Heart right ventricle (tissue), 16 donors: ENCODE measurements at regions of chr9 and their contacts with region 1.

Region 1: DNA sequence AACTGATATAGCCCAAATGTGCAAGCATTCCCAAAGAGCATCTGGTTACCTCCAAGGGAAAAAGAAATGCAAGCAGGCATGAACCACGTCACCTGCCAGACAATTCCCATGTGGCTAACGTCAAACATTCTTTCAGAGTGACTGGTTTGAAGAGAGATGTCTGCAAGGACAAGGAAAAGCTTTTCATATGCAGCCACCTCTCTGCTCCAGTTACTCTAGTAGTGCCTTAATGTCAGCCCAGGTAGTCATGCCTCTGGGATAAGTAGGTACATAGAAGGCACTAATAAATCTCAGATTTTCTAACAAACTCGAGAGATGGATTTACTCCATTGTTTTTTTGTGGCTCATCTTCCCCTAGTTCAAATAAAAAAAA is 96.8 kb upstream of the IFNK start:
- DNase-seq: no peak
- ATAC-seq: peak in 3 of 8 donors; percentile 38 to 66 (median 65)
- H3K4me3 ChIP-seq: no peak overlapping the region
- H3K27ac ChIP-seq: no peak overlapping the region
- H3K4me1 ChIP-seq: peaks cover 0 to 32% (median 6%) of the 10 kb centered on the region in 9 donors
- H3K27me3 ChIP-seq: no peaks in the 10 kb centered on the region
- CTCF ChIP-seq: no peak

Region 2: GRCh38 chr9:27272103-27272502 is 155.2 kb before region 1 on chr9:
- intact Hi-C with region 1: no loop called
- DNase-seq: no peak
- ATAC-seq: no peak
- H3K4me3 ChIP-seq: no peak overlapping the region
- H3K27ac ChIP-seq: no peak overlapping the region
- H3K4me1 ChIP-seq: peaks cover 0 to 8% (median 0%) of the 10 kb centered on the region in 9 donors
- H3K27me3 ChIP-seq: no peaks in the 10 kb centered on the region
- CTCF ChIP-seq: no peak

Region 3: GRCh38 chr9:27394154-27394825 is 33.0 kb before region 1 on chr9:
- intact Hi-C with region 1: loop called in 1 of 10 experiments (anchors 5 kb)
- DNase-seq: peak in 1 of 2 donors; percentile 10
- ATAC-seq: peak; percentile 33 to 85 (median 68)
- H3K4me3 ChIP-seq: no peak overlapping the region
- H3K27ac ChIP-seq: peak overlapping the region in 3 of 10 donors; percentile 3 to 46 (median 39)
- H3K4me1 ChIP-seq: peaks cover 0 to 28% (median 18%) of the 10 kb centered on the region in 9 donors
- H3K27me3 ChIP-seq: no peaks in the 10 kb centered on the region
- CTCF ChIP-seq: no peak